AG04450 (cell line): ENCODE measurements at regions of chr3 and their contacts with region 1.

Region 1: GRCh38 chr3:69197455-69198185 is 75.2 kb upstream of the LMOD3 start:
- DNase-seq: no peak
- H3K4me3 ChIP-seq: no peak overlapping the region
- H3K27ac ChIP-seq: no peak overlapping the region
- H3K27me3 ChIP-seq: peaks cover 21% of the 10 kb centered on the region
- CTCF ChIP-seq: no peak

Region 2: GRCh38 chr3:69212411-69213139 is 15.0 kb after region 1 on chr3:
- CTCF ChIA-PET with region 1: interaction called, 12 read pairs
- POLR2A ChIA-PET with region 1: no interaction called
- DNase-seq: no peak
- H3K4me3 ChIP-seq: no peak overlapping the region
- H3K27ac ChIP-seq: no peak overlapping the region
- H3K27me3 ChIP-seq: peaks cover 4% of the 10 kb centered on the region
- CTCF ChIP-seq: no peak

Region 3: GRCh38 chr3:69226076-69226475 is 28.5 kb after region 1 on chr3:
- CTCF ChIA-PET with region 1: no interaction called
- POLR2A ChIA-PET with region 1: no interaction called
- DNase-seq: no peak
- H3K4me3 ChIP-seq: no peak overlapping the region
- H3K27ac ChIP-seq: no peak overlapping the region
- H3K27me3 ChIP-seq: peaks cover 2% of the 10 kb centered on the region
- CTCF ChIP-seq: no peak